ENCODE measurements at regions of chr3 and their contacts with region 1.

Region 1: GRCh38 chr3:132343018-132343612 is 25.9 kb downstream of the ACP3 start:
- DNase-seq: peak; percentile 73
- H3K4me3 Mint-ChIP-seq: no peak overlapping the region
- H3K27ac Mint-ChIP-seq: no peak overlapping the region
- H3K4me1 Mint-ChIP-seq: no peaks in the 10 kb centered on the region
- H3K27me3 Mint-ChIP-seq: peaks cover 21% of the 10 kb centered on the region

Region 2: GRCh38 chr3:132135628-132136333 is 207.3 kb before region 1 on chr3:
- intact Hi-C with region 1: no loop called
- DNase-seq: no peak
- H3K4me3 Mint-ChIP-seq: no peak overlapping the region
- H3K27ac Mint-ChIP-seq: no peak overlapping the region
- H3K4me1 Mint-ChIP-seq: no peaks in the 10 kb centered on the region
- H3K27me3 Mint-ChIP-seq: no peaks in the 10 kb centered on the region

Region 3: GRCh38 chr3:132231633-132232032 is 111.5 kb before region 1 on chr3:
- intact Hi-C with region 1: no loop called
- DNase-seq: no peak
- H3K4me3 Mint-ChIP-seq: no peak overlapping the region
- H3K27ac Mint-ChIP-seq: no peak overlapping the region
- H3K4me1 Mint-ChIP-seq: no peaks in the 10 kb centered on the region
- H3K27me3 Mint-ChIP-seq: no peaks in the 10 kb centered on the region

Region 4: GRCh38 chr3:132253262-132253878 is 89.7 kb before region 1 on chr3:
- intact Hi-C with region 1: loop called (anchors 1 kb)
- DNase-seq: peak; percentile 61
- H3K4me3 Mint-ChIP-seq: no peak overlapping the region
- H3K27ac Mint-ChIP-seq: no peak overlapping the region
- H3K4me1 Mint-ChIP-seq: no peaks in the 10 kb centered on the region
- H3K27me3 Mint-ChIP-seq: peaks cover 6% of the 10 kb centered on the region

Region 5: GRCh38 chr3:132486086-132486485 is 143.0 kb after region 1 on chr3:
- intact Hi-C with region 1: no loop called
- DNase-seq: no peak
- H3K4me3 Mint-ChIP-seq: no peak overlapping the region
- H3K27ac Mint-ChIP-seq: no peak overlapping the region
- H3K4me1 Mint-ChIP-seq: peaks cover 7% of the 10 kb centered on the region
- H3K27me3 Mint-ChIP-seq: no peaks in the 10 kb centered on the region

Measured in activated CD4-positive, alpha-beta T cell treated with anti-CD3 and anti-CD28 coated beads, Interleukin-2, amount 10 ng/mL, durations not matched to agents 24 days and 14 days (primary cell).